ENCODE measurements at regions of chr7 and their contacts with region 1.

Region 1: DNA sequence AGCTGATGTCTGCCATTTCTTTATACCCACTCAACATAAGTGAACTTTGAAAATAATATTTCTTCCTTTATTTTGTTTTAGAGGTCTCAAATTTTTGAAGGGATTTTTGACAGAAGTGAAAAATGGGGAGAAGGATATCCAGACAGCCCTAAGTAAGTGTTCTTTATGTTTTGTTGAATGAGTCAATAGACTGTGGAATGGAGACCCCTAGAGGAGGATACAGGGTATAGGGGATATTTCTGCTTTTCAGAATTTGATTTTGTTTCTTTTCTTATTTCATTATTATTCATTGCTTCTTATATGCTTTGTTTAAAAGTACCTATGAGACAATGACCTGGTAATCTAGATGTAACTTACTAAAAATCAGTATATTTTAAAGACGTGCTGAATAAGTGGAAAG is 34.4 kb downstream of the PLEKHA8 start:
- DNase-seq: peak; percentile 62
- H3K4me3 ChIP-seq: no peak overlapping the region
- H3K27ac ChIP-seq: no peak overlapping the region
- H3K4me1 ChIP-seq: peaks cover 13% of the 10 kb centered on the region
- CTCF ChIP-seq: peak; percentile 96

Region 2: DNA sequence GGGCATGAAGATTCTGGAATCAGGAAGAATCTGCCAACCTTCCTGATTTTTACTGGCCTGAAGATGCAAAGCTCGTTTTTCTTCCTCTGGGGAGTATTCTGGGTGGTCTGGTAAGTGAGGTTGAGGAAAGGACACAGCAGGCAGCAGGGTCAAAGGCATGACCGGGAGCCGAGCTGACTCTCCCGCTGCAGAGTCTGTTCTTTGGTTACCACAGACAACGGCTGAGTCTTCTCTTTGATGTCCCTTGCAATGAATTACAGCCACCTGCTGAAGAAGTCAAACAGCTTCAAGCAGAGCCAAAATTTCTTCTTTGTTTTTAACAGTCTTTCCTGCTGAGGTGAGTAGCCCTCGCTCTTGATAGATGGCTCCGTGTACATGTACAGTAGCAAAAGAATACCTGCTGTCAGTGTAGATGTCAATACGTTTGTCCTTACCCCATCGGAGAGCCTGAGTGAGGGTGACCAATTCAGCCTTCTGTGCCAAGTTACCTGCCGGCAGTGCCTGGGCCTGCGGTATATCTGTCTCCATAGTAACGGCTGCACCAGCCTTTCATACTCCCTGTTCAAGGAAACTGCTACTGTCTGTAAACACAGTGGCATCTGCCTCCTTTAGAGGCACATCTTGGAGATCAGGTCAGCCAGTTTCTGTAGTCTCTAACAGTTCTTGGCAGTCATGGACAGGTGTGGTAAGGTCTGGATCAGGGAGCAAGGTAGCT is 422.6 kb before region 1 on chr7:
- CTCF ChIA-PET with region 1: no interaction called
- POLR2A ChIA-PET with region 1: no interaction called
- intact Hi-C with region 1: loop called (anchors 10 kb)
- DNase-seq: no peak
- H3K4me3 ChIP-seq: no peak overlapping the region
- H3K27ac ChIP-seq: no peak overlapping the region
- H3K4me1 ChIP-seq: no peaks in the 10 kb centered on the region
- CTCF ChIP-seq: no peak

Region 3: GRCh38 chr7:29749701-29750321 is 312.8 kb before region 1 on chr7:
- CTCF ChIA-PET with region 1: no interaction called
- POLR2A ChIA-PET with region 1: no interaction called
- intact Hi-C with region 1: loop called (anchors 10 kb)
- DNase-seq: no peak
- H3K4me3 ChIP-seq: no peak overlapping the region
- H3K27ac ChIP-seq: no peak overlapping the region
- H3K4me1 ChIP-seq: no peaks in the 10 kb centered on the region
- CTCF ChIP-seq: no peak

Region 4: GRCh38 chr7:29806208-29806994 is 256.2 kb before region 1 on chr7 and contains the start of gene WIPF3:
- CTCF ChIA-PET with region 1: no interaction called
- POLR2A ChIA-PET with region 1: no interaction called
- intact Hi-C with region 1: no loop called
- DNase-seq: no peak
- H3K4me3 ChIP-seq: no peak within 1 kb of the TSS
- H3K27ac ChIP-seq: no peak within 1 kb of the TSS
- H3K4me1 ChIP-seq: no peaks in the 10 kb centered on the region
- CTCF ChIP-seq: no peak
- total RNA-seq, gene WIPF3: 0.10 TPM in 1 of 2 replicates, not detected in the other

Region 5: DNA sequence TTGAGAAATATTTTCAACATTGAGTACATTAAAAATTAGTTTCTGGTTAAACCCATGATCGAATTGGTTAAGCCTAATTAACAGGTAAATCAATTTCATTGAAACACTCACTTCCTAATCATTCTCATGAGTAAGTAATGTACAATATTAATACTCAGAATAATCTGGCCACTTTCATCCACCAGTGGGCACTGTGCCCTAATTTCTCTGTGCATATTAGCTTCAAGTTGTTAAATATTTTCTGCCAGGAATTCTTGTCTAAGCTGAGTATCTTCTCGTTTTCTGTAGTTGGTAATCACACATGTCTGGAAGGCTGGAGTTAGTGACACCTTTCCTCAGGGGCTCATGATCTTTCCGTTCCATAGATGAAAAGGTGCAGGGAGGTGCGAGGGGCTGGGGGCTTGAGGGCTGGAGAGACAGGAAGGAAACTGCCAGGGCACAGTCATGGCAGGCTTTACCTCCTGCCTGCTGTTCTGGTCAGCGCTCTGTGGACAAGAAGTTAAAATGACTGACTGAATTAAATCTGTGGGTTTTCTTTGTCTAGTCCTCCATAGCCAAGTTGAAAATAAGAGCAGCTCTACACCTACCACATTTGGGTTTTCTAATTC is 184.4 kb before region 1 on chr7:
- CTCF ChIA-PET with region 1: interaction called, 3 read pairs
- POLR2A ChIA-PET with region 1: no interaction called
- intact Hi-C with region 1: loop called (anchors 1 kb)
- DNase-seq: peak; percentile 55
- H3K4me3 ChIP-seq: no peak overlapping the region
- H3K27ac ChIP-seq: no peak overlapping the region
- H3K4me1 ChIP-seq: no peaks in the 10 kb centered on the region
- CTCF ChIP-seq: peak; percentile 91

Region 6: DNA sequence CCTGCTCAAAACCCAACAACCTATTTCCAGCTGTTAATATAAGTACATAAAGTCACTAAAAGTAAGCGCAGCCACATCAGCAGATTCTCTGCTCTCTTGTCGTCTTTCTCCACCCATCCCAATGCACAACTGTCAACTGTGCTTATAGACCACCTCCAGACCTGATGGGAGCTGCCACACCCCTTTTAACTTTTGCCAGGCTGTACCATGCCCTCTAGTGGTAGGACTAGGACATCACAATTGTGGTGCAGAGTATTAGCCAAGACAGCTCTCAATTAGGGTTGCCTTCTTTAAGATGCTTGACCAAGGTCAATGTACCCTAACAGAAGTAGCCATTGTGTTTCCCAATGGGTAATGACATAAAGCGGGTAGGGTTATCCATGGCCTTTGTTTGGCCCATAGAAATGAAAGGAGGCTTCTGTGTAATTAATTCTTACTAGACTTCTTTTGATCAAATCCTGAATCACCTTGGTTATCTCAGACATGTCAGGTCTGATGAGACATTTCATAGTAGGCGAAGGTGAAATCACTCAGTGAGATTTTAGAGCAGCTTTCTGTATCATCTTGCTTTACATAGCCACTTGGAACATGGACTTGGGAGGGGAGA is 141.1 kb before region 1 on chr7:
- CTCF ChIA-PET with region 1: interaction called, 3 read pairs
- POLR2A ChIA-PET with region 1: no interaction called
- intact Hi-C with region 1: loop called (anchors 5 kb)
- DNase-seq: peak; percentile 68
- H3K4me3 ChIP-seq: no peak overlapping the region
- H3K27ac ChIP-seq: no peak overlapping the region
- H3K4me1 ChIP-seq: no peaks in the 10 kb centered on the region
- CTCF ChIP-seq: peak; percentile 97

Region 7: DNA sequence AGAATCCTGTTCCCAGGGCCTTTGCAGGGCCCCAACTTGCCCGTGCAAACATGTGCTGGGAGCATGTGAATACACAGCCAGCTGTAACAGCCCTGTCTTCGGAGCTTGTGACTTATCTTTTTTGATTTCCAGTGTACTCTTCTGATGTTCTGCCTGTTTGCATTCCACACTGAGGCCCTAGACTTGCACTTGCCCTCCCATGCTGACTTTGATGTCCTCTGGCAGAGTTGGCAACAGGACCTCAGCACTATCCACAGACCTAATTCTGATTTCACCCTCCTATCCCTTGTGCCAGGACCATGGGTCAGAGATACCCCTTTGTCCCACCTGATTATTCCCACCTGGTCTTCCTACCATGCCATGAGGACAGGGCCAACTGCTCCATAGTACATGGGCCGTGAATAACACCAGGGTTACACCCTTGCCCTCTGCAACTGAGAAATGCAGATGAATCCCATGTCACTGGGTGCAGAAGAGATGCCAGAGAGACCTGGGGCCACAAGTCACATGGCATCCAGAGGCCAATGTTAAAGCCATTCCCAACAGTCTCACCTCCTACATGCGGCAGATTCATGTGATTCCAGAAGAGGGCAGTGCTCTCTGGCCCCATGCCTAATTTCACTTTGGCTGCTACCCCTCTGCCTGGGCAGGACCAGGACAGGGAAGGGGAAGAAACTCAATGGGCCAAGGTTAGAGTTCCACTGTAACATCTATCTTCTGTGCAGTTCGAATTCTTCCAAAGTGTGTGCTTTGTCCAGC is 116.0 kb before region 1 on chr7:
- CTCF ChIA-PET with region 1: no interaction called
- POLR2A ChIA-PET with region 1: no interaction called
- intact Hi-C with region 1: loop called (anchors 2 kb)
- DNase-seq: peak; percentile 27
- H3K4me3 ChIP-seq: no peak overlapping the region
- H3K27ac ChIP-seq: no peak overlapping the region
- H3K4me1 ChIP-seq: no peaks in the 10 kb centered on the region
- CTCF ChIP-seq: peak; percentile 61

Region 8: DNA sequence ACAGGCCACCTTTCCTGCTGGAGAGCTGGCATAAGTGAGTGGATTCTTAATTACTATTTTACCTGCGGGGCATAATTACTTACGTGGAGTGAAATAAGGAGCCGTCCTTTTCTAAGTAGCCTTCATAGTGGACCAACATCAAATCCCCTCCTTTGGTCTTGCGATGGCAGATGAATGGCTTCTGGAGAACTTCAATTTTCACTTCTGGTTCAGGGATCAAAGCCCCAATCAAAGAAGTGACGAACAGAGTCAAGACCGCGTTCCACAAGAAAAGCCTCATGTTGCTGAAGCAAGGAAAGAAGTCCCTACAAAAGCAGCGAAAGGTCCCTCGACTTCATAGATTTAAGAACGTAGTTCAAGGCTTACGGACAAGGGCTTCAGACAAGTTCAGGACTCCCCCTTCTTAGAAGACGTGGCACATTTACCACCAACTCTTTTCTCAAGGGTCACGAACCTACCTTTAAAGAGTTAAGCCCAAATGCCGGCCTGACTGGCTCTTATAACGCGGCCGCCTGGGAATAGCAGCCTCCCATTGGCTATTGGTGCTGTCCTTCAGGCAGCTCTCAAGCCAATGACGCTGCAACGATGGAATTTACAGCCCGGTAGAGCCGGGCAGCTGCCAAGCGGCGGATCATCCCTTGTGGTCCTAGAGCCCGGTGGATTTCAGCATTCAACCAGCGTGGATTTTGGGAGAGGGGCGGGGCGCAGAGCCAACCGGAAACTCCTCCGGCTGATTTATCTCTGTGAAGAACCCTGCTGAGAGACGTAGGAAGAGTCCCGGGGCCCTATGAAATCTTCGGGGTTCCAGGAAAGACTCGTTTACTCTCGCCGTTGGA is 36.1 kb before region 1 on chr7 and contains the start of gene FKBP14:
- CTCF ChIA-PET with region 1: no interaction called
- POLR2A ChIA-PET with region 1: interaction called, 6 read pairs
- intact Hi-C with region 1: loop called (anchors 1 kb)
- DNase-seq: peak; percentile 99
- H3K4me3 ChIP-seq: peak within 1 kb of the TSS; percentile 81
- H3K27ac ChIP-seq: peak within 1 kb of the TSS; percentile 69
- H3K4me1 ChIP-seq: peaks cover 45% of the 10 kb centered on the region
- CTCF ChIP-seq: no peak
- total RNA-seq, gene FKBP14: 5.3 and 6.3 TPM in 2 replicates